OCI-LY7 (cell line): ENCODE measurements at regions of chr3 and their contacts with region 1.

Region 1: GRCh38 chr3:49093853-49094767 is at the start of gene QRICH1:
- DNase-seq: peak; percentile 99
- H3K4me3 ChIP-seq: peak within 1 kb of the TSS; percentile 94
- H3K27ac ChIP-seq: peak within 1 kb of the TSS; percentile 87
- H3K4me1 ChIP-seq: peaks cover 23% of the 10 kb centered on the region
- CTCF ChIP-seq: peak; percentile 79
- total RNA-seq, gene QRICH1: 93.0 and 111 TPM in 2 replicates

Region 2: GRCh38 chr3:49007068-49007770 is 86.9 kb before region 1 on chr3 and contains the start of gene WDR6:
- CTCF ChIA-PET with region 1: no interaction called
- POLR2A ChIA-PET with region 1: interaction called, 6 read pairs
- intact Hi-C with region 1: loop called (anchors 5 kb)
- DNase-seq: peak; percentile 99
- H3K4me3 ChIP-seq: peak within 1 kb of the TSS; percentile 78
- H3K27ac ChIP-seq: peak within 1 kb of the TSS; percentile 74
- H3K4me1 ChIP-seq: peaks cover 18% of the 10 kb centered on the region
- CTCF ChIP-seq: peak; percentile 73
- total RNA-seq, gene WDR6: 92.0 and 101 TPM in 2 replicates

Region 3: GRCh38 chr3:49081429-49081828 is 12.7 kb before region 1 on chr3:
- CTCF ChIA-PET with region 1: no interaction called
- POLR2A ChIA-PET with region 1: interaction called, 12 read pairs
- intact Hi-C with region 1: no loop called
- DNase-seq: no peak
- H3K4me3 ChIP-seq: no peak overlapping the region
- H3K27ac ChIP-seq: no peak overlapping the region
- H3K4me1 ChIP-seq: no peaks in the 10 kb centered on the region
- CTCF ChIP-seq: no peak

Region 4: DNA sequence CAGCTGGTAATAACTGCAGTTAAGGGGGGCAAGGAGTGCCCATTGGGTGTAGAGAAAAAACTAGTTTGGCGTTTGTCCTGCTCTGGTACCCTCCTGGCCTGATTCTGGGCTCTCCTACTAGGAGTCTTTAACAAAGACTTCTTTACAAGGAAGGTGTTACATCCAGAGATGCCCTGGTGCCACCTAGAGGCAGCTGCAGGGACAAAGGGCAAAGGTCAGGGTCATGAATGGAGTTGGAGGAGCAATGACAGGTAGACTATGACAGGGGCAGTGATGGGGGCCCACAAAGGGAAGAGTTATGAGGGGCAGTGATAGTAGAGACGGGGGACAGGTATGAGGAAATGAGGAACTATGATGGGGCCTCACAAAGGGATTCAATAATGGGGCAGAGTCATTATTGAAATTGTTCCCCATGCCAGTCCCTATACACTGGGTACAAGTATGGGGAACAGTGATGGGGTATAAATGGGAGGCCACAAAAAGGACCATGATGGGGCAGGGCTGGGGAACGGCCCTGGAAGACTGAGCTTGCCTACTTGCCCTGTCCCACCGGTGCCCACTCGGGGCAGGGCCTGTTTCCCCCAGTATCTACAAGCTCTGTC is 64.1 kb after region 1 on chr3:
- CTCF ChIA-PET with region 1: no interaction called
- POLR2A ChIA-PET with region 1: no interaction called
- intact Hi-C with region 1: loop called (anchors 1 kb)
- DNase-seq: peak; percentile 72
- H3K4me3 ChIP-seq: no peak overlapping the region
- H3K27ac ChIP-seq: no peak overlapping the region
- H3K4me1 ChIP-seq: no peaks in the 10 kb centered on the region
- CTCF ChIP-seq: peak; percentile 83